MCF 10A (cell line): ENCODE measurements at regions of chr1 and their contacts with region 1.

Region 1: DNA sequence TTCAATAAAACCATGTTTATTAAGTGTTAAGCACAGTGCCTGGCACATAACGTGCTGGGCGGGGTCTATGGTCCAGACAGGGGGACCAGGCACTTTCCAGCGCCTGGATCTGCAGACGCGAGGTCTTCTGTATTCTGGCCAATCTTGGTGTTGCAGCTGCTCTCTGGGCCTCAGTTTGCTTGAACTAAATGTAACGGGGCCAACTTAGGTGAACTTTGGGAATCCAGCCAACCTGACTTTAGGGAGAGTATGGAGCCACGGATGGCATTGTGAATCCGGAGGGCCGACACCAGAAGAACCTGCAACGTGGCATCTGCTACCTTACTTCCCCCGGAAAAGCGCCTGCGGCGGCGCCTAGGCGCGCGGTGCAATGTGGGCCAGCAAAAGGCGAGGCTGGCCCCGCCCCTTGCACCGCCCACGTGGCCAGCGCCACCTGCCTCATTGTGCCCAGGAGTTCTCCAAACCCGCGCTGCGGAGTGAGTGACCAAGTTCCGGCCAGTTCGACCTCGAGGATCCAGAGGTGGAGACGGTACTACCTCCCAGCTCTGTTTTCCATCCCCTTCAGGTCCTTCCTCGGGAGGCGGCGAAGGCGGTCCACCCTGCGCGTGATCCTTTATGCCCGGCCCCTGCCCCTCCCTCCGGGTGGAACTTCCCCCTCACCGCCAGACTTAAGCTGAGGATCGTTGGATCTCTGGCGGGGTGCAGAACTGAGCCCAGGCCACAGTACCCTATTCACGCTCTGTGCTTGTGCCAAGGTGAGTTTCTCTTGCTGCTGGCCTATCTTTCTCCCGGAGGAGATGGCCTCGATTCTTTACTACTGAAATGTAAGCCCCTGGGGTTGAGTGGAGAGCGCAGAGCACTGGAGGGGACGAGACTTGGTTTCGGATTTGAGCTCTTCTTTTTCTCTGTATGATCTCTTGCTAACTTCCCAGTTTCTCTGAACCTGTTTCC is at the start of gene AKR1A1:
- DNase-seq: peak; percentile 94
- H3K4me3 Mint-ChIP-seq: peak within 1 kb of the TSS; percentile 97
- H3K27ac Mint-ChIP-seq: peak within 1 kb of the TSS; percentile 94
- H3K4me1 Mint-ChIP-seq: peaks cover 12% of the 10 kb centered on the region
- H3K27me3 Mint-ChIP-seq: no peaks in the 10 kb centered on the region
- CTCF ChIP-seq: no peak
- total RNA-seq, gene AKR1A1: 108 and 142 TPM in 2 replicates

Region 2: GRCh38 chr1:45499415-45499769 is 51.3 kb before region 1 on chr1:
- CTCF ChIA-PET with region 1: interaction called, 3 read pairs
- POLR2A ChIA-PET with region 1: interaction called, 15 read pairs
- intact Hi-C with region 1: no loop called
- DNase-seq: no peak
- H3K4me3 Mint-ChIP-seq: peak overlapping the region; percentile 97
- H3K27ac Mint-ChIP-seq: peak overlapping the region; percentile 94
- H3K4me1 Mint-ChIP-seq: peaks cover 26% of the 10 kb centered on the region
- H3K27me3 Mint-ChIP-seq: no peaks in the 10 kb centered on the region
- CTCF ChIP-seq: no peak

Region 3: GRCh38 chr1:45535988-45536766 is 14.5 kb before region 1 on chr1:
- CTCF ChIA-PET with region 1: interaction called, 3 read pairs
- POLR2A ChIA-PET with region 1: interaction called, 21 read pairs
- intact Hi-C with region 1: no loop called
- DNase-seq: no peak
- H3K4me3 Mint-ChIP-seq: no peak overlapping the region
- H3K27ac Mint-ChIP-seq: no peak overlapping the region
- H3K4me1 Mint-ChIP-seq: peaks cover 4% of the 10 kb centered on the region
- H3K27me3 Mint-ChIP-seq: no peaks in the 10 kb centered on the region
- CTCF ChIP-seq: no peak

Region 4: GRCh38 chr1:45583264-45583665 is 32.6 kb after region 1 on chr1:
- CTCF ChIA-PET with region 1: interaction called, 3 read pairs
- POLR2A ChIA-PET with region 1: interaction called, 13 read pairs
- intact Hi-C with region 1: no loop called
- DNase-seq: peak; percentile 97
- H3K4me3 Mint-ChIP-seq: peak overlapping the region; percentile 89
- H3K27ac Mint-ChIP-seq: peak overlapping the region; percentile 68
- H3K4me1 Mint-ChIP-seq: peaks cover 15% of the 10 kb centered on the region
- H3K27me3 Mint-ChIP-seq: no peaks in the 10 kb centered on the region
- CTCF ChIP-seq: no peak

Region 5: GRCh38 chr1:45669859-45670655 is 119.4 kb after region 1 on chr1:
- CTCF ChIA-PET with region 1: no interaction called
- POLR2A ChIA-PET with region 1: no interaction called
- intact Hi-C with region 1: no loop called
- DNase-seq: no peak
- H3K4me3 Mint-ChIP-seq: no peak overlapping the region
- H3K27ac Mint-ChIP-seq: no peak overlapping the region
- H3K4me1 Mint-ChIP-seq: peaks cover 30% of the 10 kb centered on the region
- H3K27me3 Mint-ChIP-seq: no peaks in the 10 kb centered on the region
- CTCF ChIP-seq: no peak